RWPE1 (cell line): ENCODE measurements at regions of chr9 and their contacts with region 1.

Region 1: DNA sequence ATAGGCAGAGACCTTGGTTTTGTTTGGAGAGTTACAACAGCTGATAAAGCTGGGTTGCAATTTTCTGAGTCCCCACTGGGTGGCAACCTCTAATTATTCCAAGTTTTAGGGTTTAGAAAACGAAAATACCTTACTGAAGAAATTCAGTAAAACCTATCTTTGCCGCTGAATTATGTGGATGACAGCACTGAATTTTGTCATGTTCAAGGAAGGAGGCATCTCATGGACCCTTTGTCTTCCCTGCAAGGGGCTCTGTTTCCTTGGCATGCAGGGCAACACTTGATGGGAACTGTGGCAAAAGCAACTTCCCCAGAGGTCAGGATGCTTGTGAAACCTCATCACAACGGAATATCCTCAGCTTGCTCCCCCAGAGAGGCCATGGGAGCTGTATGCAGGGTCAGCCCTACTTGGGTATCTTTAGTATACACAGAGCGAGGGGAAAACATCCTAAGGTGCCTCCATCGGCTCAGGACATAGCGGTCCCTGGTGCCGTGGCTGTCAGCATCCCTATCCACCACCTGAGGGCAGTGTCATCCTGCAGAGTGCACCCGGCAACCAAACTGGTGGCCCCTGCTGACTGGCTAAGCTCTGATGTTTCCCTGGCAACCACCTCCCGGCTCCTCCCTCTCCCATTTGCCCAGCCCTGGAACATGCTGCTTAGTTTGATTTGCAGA is 123.1 kb downstream of the RXRA start:
- DNase-seq: peak; percentile 99
- H3K27ac ChIP-seq: no peak overlapping the region
- CTCF ChIP-seq: peak; percentile 98

Region 2: GRCh38 chr9:134175808-134176598 is 273.4 kb before region 1 on chr9:
- CTCF ChIA-PET with region 1: interaction called, 17 read pairs
- POLR2A ChIA-PET with region 1: no interaction called
- DNase-seq: no peak
- H3K27ac ChIP-seq: no peak overlapping the region
- CTCF ChIP-seq: no peak; the same call in 1 of the 2 replicates

Region 3: GRCh38 chr9:134391314-134392231 is 57.8 kb before region 1 on chr9:
- CTCF ChIA-PET with region 1: no interaction called
- POLR2A ChIA-PET with region 1: no interaction called
- DNase-seq: no peak
- H3K27ac ChIP-seq: peak overlapping the region; percentile 99
- CTCF ChIP-seq: no peak

Region 4: GRCh38 chr9:134434894-134435506 is 14.4 kb before region 1 on chr9:
- CTCF ChIA-PET with region 1: no interaction called
- POLR2A ChIA-PET with region 1: no interaction called
- DNase-seq: peak; percentile 90
- H3K27ac ChIP-seq: peak overlapping the region; percentile 100
- CTCF ChIP-seq: no peak

Region 5: DNA sequence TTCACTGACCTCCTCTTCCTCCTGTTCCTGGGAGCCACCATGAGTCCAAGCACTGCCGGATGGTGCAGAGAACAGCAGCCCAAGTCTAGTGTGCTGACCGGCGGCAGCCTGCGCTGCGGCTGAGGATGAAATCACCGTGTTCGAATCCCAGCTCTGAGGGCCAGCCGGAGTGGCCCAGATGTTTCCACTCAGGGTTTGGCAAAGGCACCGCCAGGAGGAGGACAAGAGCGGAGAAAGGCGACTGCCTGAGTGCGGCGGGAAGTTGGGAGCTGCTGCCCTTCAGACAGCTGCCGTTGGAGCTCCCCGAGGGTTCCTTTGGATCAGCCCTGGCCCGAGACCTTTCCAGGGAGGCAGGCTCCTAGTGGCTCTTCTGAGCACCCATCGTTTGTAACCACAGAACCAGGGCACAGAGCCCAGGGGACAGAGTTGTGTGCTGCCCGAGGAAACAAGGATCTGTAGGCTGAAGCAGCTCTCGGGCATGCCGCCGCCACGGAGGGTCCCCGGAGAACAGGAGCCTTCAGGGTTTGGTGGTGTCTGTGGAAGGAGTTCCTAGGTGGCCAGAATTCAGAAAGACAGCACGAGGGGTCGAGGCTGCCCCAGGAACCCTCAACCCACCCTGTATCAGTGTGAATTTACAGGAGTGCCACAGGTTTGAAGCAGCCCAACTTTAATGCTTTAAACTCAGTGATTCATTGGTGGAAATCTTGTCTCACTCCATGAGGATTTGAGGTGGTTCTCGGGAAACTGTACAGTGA is 76.7 kb after region 1 on chr9:
- CTCF ChIA-PET with region 1: no interaction called
- POLR2A ChIA-PET with region 1: no interaction called
- DNase-seq: no peak
- H3K27ac ChIP-seq: no peak overlapping the region
- CTCF ChIP-seq: no peak

Region 6: DNA sequence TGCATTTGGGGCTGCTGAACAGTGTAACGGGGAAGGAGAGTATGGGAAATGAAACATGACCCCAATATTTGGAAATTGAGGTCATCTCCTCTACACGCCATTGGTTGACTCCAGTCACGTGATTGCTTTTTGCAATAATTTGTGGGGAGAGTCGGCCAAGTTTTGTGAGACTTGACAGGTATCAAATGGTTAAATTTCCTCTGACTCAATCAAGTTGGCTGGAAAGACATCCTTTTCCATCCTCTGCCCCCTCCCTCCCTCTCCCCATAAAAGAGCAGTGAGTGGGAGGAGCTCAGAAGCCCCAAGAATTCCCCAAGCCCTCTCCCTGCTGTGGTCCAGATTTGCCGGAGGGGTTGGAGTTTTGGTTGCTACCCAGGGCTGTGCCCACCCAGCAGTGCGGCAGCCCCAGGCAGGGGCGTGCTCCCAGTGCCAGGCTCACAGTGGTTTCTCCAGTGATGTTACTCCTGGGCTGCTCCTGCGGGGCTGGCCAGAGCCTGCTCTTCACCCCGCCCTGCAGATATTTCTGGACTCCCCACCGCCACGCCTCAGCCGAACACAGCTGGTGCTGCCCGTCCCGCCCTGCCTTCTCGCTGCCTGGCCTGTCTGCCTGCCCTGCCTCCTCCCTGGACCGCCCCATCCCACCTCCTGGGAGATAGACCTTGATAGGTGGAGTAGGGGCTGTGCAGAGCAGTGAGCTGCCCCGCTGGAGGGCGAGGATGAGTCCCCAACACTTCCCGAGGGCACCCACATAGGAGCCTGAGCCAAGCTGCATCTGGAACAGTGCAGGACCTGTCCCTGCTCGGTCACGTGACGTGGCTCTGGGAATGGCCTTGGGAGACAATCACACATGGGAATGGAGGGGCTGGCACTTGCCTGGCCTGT is 195.6 kb after region 1 on chr9:
- CTCF ChIA-PET with region 1: interaction called, 10 read pairs
- POLR2A ChIA-PET with region 1: no interaction called
- DNase-seq: peak; percentile 99
- H3K27ac ChIP-seq: peak overlapping the region; percentile 97
- CTCF ChIP-seq: no peak

Region 7: DNA sequence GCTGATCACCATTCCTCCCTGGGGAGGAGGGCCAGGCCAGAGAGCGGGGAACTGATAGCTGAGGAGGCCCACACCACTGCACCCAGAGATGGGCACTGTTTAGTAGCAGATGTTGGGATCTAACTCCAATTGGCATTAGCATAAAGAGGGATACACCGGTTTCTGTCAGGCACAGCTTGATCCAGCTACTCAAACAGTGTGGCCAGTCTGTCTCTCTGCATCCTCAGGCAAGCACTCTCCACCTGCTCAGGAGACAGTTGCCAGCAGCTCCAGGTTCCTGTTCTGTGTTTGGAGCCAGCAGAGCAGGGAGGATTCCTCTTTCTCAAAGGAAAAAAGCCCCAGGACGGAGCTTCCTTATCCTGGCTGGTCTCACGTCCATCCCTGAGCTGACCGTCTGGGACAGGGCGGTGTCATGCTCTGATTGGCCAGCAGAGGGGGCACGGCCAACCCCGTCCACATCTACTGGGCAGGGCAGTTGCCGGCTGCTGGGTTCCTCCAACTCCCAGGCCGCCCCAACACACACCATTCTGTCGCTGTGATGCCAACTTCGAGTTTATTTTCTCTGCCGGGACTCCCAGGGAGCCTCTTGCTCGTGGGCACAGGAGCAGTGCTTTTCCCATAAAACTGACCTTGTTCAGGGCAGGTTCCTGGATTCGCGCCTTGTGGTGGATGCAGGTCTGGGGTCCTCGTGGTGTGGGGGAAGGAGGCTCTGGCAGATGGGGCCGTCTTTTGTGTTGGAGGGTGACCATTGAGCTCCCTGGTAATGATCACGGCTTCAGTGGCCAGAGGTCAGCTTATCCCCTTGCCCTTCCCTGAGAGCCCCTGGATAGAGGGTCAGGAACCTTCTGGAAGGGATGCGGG is 240.2 kb after region 1 on chr9:
- CTCF ChIA-PET with region 1: interaction called, 15 read pairs
- POLR2A ChIA-PET with region 1: no interaction called
- DNase-seq: peak; percentile 87
- H3K27ac ChIP-seq: peak overlapping the region; percentile 20
- CTCF ChIP-seq: peak; percentile 97

Region 8: DNA sequence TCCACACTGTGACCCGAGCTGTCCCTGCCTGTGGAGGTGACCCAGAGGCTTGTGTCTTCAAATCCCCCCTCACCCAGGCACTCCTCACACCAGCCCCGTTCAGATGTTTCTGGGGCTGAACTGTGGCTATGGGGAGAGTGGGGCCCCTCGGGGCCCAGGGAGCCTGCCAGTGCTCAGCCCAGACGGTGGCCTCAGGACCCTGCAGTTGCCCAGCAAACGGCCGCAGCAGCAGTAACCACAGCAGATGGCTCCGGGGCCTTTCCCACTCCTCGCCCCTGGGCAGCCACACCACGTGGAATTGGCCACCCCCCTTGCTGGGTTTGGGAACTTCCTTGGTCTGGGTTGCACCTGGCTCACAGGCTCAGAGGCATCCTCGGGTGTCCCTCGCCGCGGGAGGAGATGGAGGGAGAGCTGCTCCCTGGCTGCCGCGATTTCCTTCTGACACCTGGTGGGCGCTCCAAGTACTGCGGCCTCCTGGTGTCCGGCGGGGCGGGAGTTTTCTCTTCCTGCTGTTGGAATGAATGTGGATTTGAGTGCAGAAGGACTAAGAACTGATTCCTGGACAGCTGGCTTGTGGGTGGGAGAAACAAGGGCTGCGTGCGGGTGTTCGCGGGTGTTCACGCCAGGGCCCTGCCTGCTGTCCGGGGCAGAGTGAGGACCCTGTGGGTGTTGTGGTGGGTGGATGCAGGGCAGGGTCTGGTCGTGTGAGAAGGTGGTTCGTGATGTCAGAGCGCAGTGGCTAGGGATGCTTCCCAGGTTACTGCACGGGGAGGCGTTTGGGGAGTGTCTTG is 289.7 kb after region 1 on chr9:
- CTCF ChIA-PET with region 1: interaction called, 17 read pairs
- POLR2A ChIA-PET with region 1: no interaction called
- DNase-seq: peak; percentile 90
- H3K27ac ChIP-seq: peak overlapping the region; percentile 10
- CTCF ChIP-seq: peak; percentile 98